Upper lobe of right lung (tissue), 1 donor: ENCODE measurements at regions of chr3 and their contacts with region 1.

Region 1: GRCh38 chr3:159258934-159259333 is 457.1 kb downstream of the MFSD1 start:
- DNase-seq: no peak
- ATAC-seq: no peak
- H3K4me3 ChIP-seq: no peak overlapping the region
- H3K27ac ChIP-seq: no peak overlapping the region
- H3K4me1 ChIP-seq: no peaks in the 10 kb centered on the region
- H3K27me3 ChIP-seq: peaks cover 8% of the 10 kb centered on the region
- CTCF ChIP-seq: no peak

Region 2: DNA sequence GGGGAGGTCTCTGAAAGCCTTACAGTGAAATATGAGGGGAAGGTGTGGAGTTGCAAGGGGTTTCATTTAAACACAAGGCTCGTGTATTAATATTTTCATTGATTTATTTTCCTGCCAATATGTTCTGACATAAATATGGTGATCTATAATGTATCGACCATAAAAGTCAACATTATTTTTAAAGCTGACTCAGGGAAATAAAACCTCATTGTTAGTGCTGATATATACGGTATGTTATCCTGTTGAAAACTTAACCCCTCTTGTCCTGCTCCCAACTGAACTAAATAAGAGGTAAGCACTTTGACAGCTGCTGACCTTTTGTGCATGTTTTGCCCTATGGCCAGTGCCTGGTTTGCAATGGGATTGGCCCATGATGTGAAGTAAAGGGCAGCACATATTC is 409.2 kb before region 1 on chr3:
- intact Hi-C with region 1: loop called (anchors 5 kb)
- DNase-seq: no peak
- ATAC-seq: no peak
- H3K4me3 ChIP-seq: no peak overlapping the region
- H3K27ac ChIP-seq: no peak overlapping the region
- H3K4me1 ChIP-seq: no peaks in the 10 kb centered on the region
- H3K27me3 ChIP-seq: no peaks in the 10 kb centered on the region
- CTCF ChIP-seq: no peak